Activated naive CD4-positive, alpha-beta T cell treated with anti-CD3 and anti-CD28 coated beads for 36 hours (primary cell): ENCODE measurements at regions of chr19 and their contacts with region 1.

Region 1: GRCh38 chr19:35899547-35900214 is 659 bp downstream of the NFKBID start:
- DNase-seq: peak; percentile 91
- H3K4me3 Mint-ChIP-seq: peak overlapping the region; percentile 94
- H3K27ac Mint-ChIP-seq: peak overlapping the region; percentile 98
- H3K4me1 Mint-ChIP-seq: peaks cover 70% of the 10 kb centered on the region
- H3K27me3 Mint-ChIP-seq: no peaks in the 10 kb centered on the region

Region 2: GRCh38 chr19:35648017-35648961 is 251.4 kb before region 1 on chr19 and contains the start of gene COX6B1:
- CTCF ChIA-PET with region 1: no interaction called
- intact Hi-C with region 1: loop called (anchors 1 kb)
- DNase-seq: peak; percentile 97
- H3K4me3 Mint-ChIP-seq: peak within 1 kb of the TSS; percentile 87
- H3K27ac Mint-ChIP-seq: peak within 1 kb of the TSS; percentile 91
- H3K4me1 Mint-ChIP-seq: peaks cover 40% of the 10 kb centered on the region
- H3K27me3 Mint-ChIP-seq: no peaks in the 10 kb centered on the region
- total RNA-seq, gene COX6B1: 499 to 512 TPM

Region 3: GRCh38 chr19:35716801-35717666 is 182.6 kb before region 1 on chr19:
- CTCF ChIA-PET with region 1: no interaction called
- intact Hi-C with region 1: loop called (anchors 1 kb)
- DNase-seq: peak; percentile 96
- H3K4me3 Mint-ChIP-seq: peak overlapping the region; percentile 92
- H3K27ac Mint-ChIP-seq: peak overlapping the region; percentile 100
- H3K4me1 Mint-ChIP-seq: peaks cover 32% of the 10 kb centered on the region
- H3K27me3 Mint-ChIP-seq: no peaks in the 10 kb centered on the region

Region 4: DNA sequence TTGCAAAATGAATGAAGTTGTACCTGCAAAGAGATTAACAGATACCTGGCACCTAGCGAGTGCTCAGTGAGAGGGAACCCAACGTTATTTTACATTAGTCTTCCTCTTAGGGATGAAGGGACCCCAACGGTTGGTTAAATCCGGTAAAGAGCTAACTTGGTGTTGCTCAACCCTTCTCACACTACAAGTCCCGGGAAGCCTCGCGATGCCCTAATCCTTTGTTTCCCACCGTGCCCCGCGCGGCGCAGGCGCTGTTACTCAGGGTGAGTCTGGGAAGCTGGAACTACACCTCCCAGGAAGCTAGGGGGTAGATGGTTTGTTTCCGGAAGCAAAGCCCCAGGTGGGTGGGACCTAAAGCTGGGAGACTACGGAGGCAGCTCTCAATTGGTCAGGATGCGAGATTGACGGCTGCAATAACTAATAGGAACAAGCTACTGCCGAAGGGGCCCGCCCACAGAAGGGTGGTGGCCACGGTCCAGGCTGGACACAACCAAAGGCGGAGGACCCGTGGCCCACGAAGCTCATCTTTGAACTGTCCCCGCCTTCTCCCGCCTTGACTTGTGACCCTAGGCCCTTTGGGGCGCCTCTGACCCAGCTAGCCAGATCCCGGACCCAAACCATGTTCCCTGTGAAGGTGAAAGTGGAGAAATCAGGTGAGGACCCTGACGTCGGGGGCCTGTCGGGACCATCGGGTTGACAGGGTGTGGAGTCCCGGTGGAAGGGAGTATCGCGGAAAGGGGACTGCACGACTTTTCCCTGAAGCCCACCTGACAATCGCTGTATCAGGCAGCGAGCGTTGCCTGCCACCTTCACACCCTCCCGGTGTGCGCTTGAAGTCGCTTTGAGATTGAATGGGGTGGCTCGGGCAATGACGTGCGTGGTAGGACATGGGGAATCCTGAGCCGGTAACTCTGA is 151.3 kb before region 1 on chr19 and contains the start of gene LIN37:
- CTCF ChIA-PET with region 1: no interaction called
- intact Hi-C with region 1: loop called (anchors 1 kb)
- DNase-seq: peak; percentile 100
- H3K4me3 Mint-ChIP-seq: peak within 1 kb of the TSS; percentile 98
- H3K27ac Mint-ChIP-seq: peak within 1 kb of the TSS; percentile 92
- H3K4me1 Mint-ChIP-seq: peaks cover 44% of the 10 kb centered on the region
- H3K27me3 Mint-ChIP-seq: no peaks in the 10 kb centered on the region
- total RNA-seq, gene LIN37: 5.7 to 9.7 TPM

Region 5: DNA sequence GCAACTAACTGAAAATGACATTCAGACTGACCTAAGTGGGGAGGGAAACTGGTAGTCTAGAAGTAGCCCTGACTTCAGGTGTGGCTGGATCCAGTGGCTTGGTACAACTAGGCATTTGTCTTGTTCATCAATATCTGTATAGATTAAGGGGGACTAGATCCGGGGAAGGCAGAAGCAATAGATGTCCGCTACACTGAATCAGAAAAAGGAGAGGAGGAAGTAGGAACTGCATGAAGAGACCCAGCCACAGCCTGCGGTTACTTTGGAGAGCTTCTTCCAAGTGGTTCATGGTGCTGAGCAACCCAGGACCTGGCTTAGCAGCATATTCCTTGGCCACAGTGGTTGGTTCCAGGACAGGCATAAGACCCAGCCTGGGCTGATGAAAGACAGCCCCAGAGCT is 77.1 kb before region 1 on chr19:
- CTCF ChIA-PET with region 1: no interaction called
- intact Hi-C with region 1: no loop called
- DNase-seq: no peak
- H3K4me3 Mint-ChIP-seq: no peak overlapping the region
- H3K27ac Mint-ChIP-seq: no peak overlapping the region
- H3K4me1 Mint-ChIP-seq: peaks cover 3% of the 10 kb centered on the region
- H3K27me3 Mint-ChIP-seq: peaks cover 17% of the 10 kb centered on the region

Region 6: DNA sequence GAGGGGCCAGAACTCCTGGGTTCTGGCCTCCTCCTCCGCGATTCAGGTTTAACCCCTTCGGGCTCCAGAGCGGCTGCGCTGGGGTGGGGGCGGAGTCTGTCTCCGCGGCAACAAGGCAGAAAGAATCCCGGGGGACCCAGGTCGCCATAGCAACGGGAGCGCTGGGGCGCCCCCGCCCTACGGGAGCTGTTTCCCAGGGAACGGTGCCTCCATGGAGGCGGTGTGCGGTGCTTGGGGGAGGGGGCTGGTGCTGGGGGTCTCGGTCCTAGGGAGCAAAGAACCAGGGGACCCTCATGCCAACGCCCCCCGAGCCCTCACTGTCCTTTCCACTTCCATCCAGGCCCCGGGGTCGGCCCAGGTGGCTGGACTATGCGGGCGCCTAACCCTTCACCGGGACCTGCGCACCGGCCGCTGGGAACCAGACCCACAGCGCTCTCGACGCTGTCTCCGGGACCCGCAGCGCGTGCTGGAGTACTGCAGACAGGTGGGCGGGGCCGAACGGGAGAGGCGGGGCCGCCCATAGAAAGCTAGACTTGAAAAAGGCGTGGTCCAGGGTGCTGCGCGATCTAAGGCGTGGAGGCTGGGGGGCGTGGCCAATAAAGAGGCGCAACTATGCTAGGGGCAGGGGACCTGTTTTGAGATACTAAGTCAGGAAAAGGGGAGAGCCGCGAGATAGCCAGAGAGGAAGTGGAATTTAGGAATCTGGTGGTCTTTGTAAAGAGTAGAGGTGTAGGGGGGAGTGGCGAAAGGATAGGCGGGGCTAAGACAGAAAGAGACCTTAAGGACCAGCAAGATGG is 30.2 kb before region 1 on chr19:
- CTCF ChIA-PET with region 1: no interaction called
- intact Hi-C with region 1: no loop called
- DNase-seq: peak; percentile 85
- H3K4me3 Mint-ChIP-seq: peak overlapping the region; percentile 77
- H3K27ac Mint-ChIP-seq: peak overlapping the region; percentile 67
- H3K4me1 Mint-ChIP-seq: peaks cover 16% of the 10 kb centered on the region
- H3K27me3 Mint-ChIP-seq: peaks cover 46% of the 10 kb centered on the region

Region 7: GRCh38 chr19:35882114-35882832 is 17.4 kb before region 1 on chr19:
- CTCF ChIA-PET with region 1: interaction called, 8 read pairs
- intact Hi-C with region 1: loop called (anchors 1 kb)
- DNase-seq: peak; percentile 58
- H3K4me3 Mint-ChIP-seq: no peak overlapping the region
- H3K27ac Mint-ChIP-seq: no peak overlapping the region
- H3K4me1 Mint-ChIP-seq: peaks cover 9% of the 10 kb centered on the region
- H3K27me3 Mint-ChIP-seq: peaks cover 21% of the 10 kb centered on the region

Region 8: GRCh38 chr19:36014029-36014924 is 114.6 kb after region 1 on chr19 and contains the start of gene ALKBH6:
- CTCF ChIA-PET with region 1: interaction called, 3 read pairs
- intact Hi-C with region 1: loop called (anchors 1 kb)
- DNase-seq: peak; percentile 100
- H3K4me3 Mint-ChIP-seq: peak within 1 kb of the TSS; percentile 97
- H3K27ac Mint-ChIP-seq: peak within 1 kb of the TSS; percentile 94
- H3K4me1 Mint-ChIP-seq: peaks cover 27% of the 10 kb centered on the region
- H3K27me3 Mint-ChIP-seq: no peaks in the 10 kb centered on the region
- total RNA-seq, gene ALKBH6: 36.9 to 37.8 TPM

Region 9: DNA sequence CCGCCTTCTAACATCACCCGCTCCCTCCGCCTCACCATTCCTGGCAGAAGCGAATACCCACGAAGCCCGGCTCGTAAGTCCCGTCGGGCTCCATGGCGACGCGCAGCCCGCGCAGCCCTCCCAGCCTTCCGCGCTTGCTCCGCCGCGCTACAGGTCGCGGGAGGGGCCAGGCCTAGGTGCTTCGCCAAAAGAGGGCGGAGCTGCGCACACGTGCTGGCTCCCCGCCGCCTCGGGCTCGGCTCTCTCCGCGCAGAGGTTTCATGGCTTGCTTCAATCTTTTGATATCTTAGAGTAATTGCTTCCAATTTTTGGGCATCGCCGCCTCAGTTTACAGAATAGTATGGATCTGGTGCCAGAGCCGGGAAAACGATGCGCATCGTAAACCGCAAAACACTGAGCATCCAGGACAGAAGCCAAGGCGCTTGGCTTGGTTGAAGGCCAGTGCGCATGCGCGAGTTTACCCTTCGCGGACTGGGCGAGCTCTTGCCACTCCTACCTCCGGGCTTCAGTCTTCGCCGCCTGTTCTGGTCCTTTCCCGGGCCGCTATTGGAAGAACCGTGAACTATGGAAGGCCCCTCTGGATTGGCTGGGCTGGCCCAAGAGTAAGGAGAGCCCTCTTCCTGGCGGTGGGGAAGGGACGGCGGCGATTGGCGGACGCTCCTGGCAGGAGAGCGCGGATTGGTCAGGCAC is 215.2 kb after region 1 on chr19 and contains the start of gene POLR2I:
- CTCF ChIA-PET with region 1: interaction called, 3 read pairs
- intact Hi-C with region 1: loop called (anchors 2 kb)
- DNase-seq: peak; percentile 99
- H3K4me3 Mint-ChIP-seq: peak within 1 kb of the TSS; percentile 99
- H3K27ac Mint-ChIP-seq: peak within 1 kb of the TSS; percentile 91
- H3K4me1 Mint-ChIP-seq: peaks cover 31% of the 10 kb centered on the region
- H3K27me3 Mint-ChIP-seq: no peaks in the 10 kb centered on the region
- total RNA-seq, gene POLR2I: 86.8 to 87.4 TPM